PC-9 (cell line): ENCODE measurements at regions of chr22 and their contacts with region 1.

Region 1: DNA sequence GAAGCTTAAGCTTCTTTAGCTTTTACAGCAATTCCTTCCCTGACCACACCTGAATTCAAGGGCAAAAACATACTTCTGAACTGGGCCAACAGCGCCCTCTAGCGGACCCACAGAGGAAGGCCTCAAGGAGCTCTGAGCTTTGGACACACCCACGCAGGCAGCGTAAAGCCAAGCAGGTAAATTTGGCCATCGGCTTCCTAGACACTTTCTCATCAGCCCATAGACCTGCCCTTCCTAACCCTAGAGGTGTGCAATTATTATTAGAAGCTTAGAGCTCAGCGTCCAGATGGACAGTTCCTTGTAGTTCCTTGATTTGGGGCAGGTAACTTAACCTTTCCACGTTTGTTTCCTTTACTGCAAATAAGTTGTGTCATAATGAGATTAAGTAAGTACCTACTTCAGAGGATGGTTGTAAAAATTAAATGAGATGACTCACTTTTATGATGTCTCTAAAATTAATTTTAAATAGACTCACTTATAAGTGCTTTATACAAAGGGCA is 25.7 kb upstream of the HMGXB4 start:
- DNase-seq: peak; percentile 74 to 76
- H3K4me3 ChIP-seq: no peak overlapping the region
- H3K27ac ChIP-seq: no peak overlapping the region
- H3K4me1 ChIP-seq: no peaks in the 10 kb centered on the region
- H3K27me3 ChIP-seq: peaks cover 69% of the 10 kb centered on the region
- CTCF ChIP-seq: peak; percentile 100

Region 2: GRCh38 chr22:34414484-34415440 is 816.9 kb before region 1 on chr22:
- CTCF ChIA-PET with region 1: no interaction called
- POLR2A ChIA-PET with region 1: no interaction called
- intact Hi-C with region 1: loop called (anchors 2 kb)
- DNase-seq: peak; percentile 62 to 67
- H3K4me3 ChIP-seq: no peak overlapping the region
- H3K27ac ChIP-seq: no peak overlapping the region
- H3K4me1 ChIP-seq: no peaks in the 10 kb centered on the region
- H3K27me3 ChIP-seq: no peaks in the 10 kb centered on the region
- CTCF ChIP-seq: peak; percentile 82

Region 3: DNA sequence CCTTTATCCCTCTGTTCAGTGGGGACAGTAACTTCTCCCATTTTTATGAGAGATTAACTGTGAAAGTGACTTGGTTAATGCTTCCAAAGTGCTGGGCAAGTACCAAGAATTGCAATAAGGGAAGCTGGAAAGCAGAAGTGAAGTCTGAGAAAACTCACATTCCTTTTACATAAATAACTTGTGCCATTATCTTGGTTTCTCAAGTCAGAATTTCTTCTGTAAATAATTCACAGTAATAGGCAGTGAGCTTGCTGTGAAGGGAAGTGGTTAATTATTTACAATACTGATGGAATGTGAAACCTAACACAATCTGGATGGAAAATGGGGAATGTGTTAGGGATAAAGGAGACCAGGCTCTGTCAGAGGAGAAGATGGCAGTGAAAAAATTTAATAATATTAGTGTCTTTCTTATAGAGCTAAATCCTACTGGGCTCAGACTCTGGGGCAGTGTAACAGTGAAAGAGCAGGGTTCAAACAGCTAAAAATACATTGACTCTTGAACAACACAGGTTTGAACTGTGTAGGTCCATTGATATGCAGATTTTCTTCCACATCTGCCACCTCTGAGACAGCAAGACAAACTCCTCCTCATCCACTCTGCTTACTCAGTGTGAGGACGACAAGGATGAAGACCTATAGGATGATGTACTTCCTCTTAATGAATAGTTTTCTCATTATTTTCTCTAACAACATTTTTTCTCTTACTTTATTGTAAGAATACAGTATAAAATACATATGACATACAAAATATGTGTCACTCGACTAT is 417.2 kb before region 1 on chr22:
- CTCF ChIA-PET with region 1: no interaction called
- POLR2A ChIA-PET with region 1: no interaction called
- intact Hi-C with region 1: no loop called
- DNase-seq: no peak
- H3K4me3 ChIP-seq: no peak overlapping the region
- H3K27ac ChIP-seq: no peak overlapping the region
- H3K4me1 ChIP-seq: no peaks in the 10 kb centered on the region
- H3K27me3 ChIP-seq: 0 out of 2 replicates have a peak, but pooled peaks cover 10% of the 10 kb centered on the region
- CTCF ChIP-seq: no peak

Region 4: DNA sequence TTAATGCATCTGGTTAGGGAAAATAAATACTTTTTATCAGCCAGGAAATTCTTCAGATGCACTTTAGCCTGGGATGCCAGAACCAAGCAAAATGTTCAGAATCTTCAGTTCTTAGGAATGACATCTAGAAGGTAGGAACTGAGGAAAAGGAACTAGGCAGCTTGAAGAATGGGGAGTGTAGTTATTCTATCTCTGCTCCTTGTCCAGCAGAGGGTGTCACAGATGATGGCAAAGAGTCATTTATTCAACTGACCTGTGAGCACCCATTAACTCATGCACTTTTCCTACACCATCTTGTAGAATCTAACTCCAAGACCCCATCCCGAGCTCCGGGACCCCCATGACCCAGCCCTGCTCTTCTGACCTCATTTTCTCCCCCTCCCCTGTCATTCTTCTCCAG is 287.8 kb before region 1 on chr22:
- CTCF ChIA-PET with region 1: no interaction called
- POLR2A ChIA-PET with region 1: no interaction called
- intact Hi-C with region 1: no loop called
- DNase-seq: no peak
- H3K4me3 ChIP-seq: no peak overlapping the region
- H3K27ac ChIP-seq: no peak overlapping the region
- H3K4me1 ChIP-seq: no peaks in the 10 kb centered on the region
- H3K27me3 ChIP-seq: peaks cover 16% of the 10 kb centered on the region
- CTCF ChIP-seq: no peak

Region 5: GRCh38 chr22:35023692-35024363 is 207.8 kb before region 1 on chr22:
- CTCF ChIA-PET with region 1: interaction called, 3 read pairs
- POLR2A ChIA-PET with region 1: no interaction called
- intact Hi-C with region 1: loop called (anchors 5 kb)
- DNase-seq: peak; percentile 44 to 56
- H3K4me3 ChIP-seq: no peak overlapping the region
- H3K27ac ChIP-seq: no peak overlapping the region
- H3K4me1 ChIP-seq: no peaks in the 10 kb centered on the region
- H3K27me3 ChIP-seq: peaks cover 23% of the 10 kb centered on the region; the same call in 1 of the 2 replicates
- CTCF ChIP-seq: peak; percentile 99

Region 6: GRCh38 chr22:35212009-35212408 is 19.6 kb before region 1 on chr22:
- CTCF ChIA-PET with region 1: no interaction called
- POLR2A ChIA-PET with region 1: no interaction called
- intact Hi-C with region 1: no loop called
- DNase-seq: peak in 1 of 2 experiments; percentile 21
- H3K4me3 ChIP-seq: no peak overlapping the region
- H3K27ac ChIP-seq: no peak overlapping the region
- H3K4me1 ChIP-seq: no peaks in the 10 kb centered on the region
- H3K27me3 ChIP-seq: peaks cover 50% of the 10 kb centered on the region
- CTCF ChIP-seq: no peak

Region 7: DNA sequence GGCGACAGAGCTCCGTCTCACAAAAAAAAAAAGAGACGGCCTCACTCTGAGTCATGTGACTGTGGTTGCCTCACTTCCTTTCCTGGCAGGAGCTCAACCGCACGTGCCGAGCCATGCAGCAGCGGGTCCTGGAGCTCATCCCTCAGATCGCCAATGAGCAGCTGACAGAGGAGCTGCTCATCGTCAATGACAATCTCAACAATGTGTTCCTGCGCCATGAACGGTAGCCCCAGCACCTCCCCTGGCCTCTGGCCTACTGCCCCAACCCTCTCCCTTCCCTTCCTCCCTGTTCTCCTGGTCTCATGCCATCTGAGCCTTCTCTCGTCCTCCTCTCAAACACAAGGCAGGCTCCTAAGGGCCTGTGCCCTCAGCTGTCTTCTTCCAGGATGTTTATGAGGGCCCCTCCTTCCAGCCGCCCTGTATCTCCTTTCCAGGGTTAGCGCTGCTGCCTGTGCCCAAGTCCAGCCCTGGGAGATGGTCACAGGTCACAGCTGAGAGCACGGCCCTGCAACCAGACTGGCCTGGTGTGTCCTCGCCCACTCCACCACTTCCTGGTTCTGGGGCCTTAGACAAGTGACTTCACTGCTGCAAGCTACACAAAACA is 98.7 kb after region 1 on chr22:
- CTCF ChIA-PET with region 1: interaction called, 3 read pairs
- POLR2A ChIA-PET with region 1: interaction called, 10 read pairs
- intact Hi-C with region 1: no loop called
- DNase-seq: peak in 1 of 2 experiments; percentile 54
- H3K4me3 ChIP-seq: no peak overlapping the region
- H3K27ac ChIP-seq: no peak overlapping the region
- H3K4me1 ChIP-seq: 0 out of 2 replicates have a peak, but pooled peaks cover 3% of the 10 kb centered on the region
- H3K27me3 ChIP-seq: no peaks in the 10 kb centered on the region
- CTCF ChIP-seq: no peak